K562 (cell line): ENCODE measurements at regions of chr7 and their contacts with region 1.

Region 1: DNA sequence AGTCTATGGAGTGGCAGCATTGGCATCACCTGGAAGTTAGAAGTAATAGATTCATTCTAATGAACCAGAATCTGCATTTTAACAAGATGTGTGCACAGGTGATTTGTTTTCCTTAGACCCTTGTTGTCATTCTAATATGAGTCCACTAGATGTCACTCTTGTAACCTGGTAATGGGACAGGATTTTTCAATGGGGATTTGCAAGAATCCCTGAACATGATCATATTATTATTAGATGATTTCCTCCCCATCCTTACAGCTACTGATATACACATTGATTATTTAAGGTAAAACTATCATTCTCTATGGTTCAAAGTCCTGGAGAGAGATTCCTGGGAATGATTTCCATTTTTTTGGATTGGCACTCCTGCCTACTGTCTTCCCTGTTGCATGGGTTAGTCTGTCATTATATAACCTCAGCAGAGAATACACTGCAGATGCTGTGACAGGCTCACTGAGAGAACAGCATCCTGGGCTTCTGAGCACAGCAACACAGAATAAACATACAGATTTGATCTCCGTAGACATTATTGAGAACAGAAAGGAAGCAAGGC is 194.9 kb downstream of the SUGCT start:
- DNase-seq: peak; percentile 32 to 59 (median 38)
- ATAC-seq: peak; percentile 60; the same call in 2 of the 3 replicates
- H3K4me3 ChIP-seq: no peak overlapping the region
- H3K27ac ChIP-seq: no peak overlapping the region
- H3K4me1 ChIP-seq: no peaks in the 10 kb centered on the region
- H3K27me3 ChIP-seq: no peaks in the 10 kb centered on the region
- CTCF ChIP-seq: peak; percentile 33 to 71 (median 63); a peak in 5 of 6 replicates
- EP300 ChIP-seq: no peak
- POLR2A ChIP-seq: no peak
- RAD21 ChIP-seq: peak; percentile 82 to 88

Region 2: GRCh38 chr7:40232242-40232893 is 97.3 kb before region 1 on chr7:
- CTCF ChIA-PET with region 1: no interaction called
- POLR2A ChIA-PET with region 1: no interaction called
- in situ Hi-C with region 1: no loop called
- intact Hi-C with region 1: loop called (anchors 2 kb)
- DNase-seq: peak in 2 of 4 experiments; percentile 20 to 50
- ATAC-seq: peak; percentile 78
- H3K4me3 ChIP-seq: no peak overlapping the region
- H3K27ac ChIP-seq: no peak overlapping the region
- H3K4me1 ChIP-seq: no peaks in the 10 kb centered on the region
- H3K27me3 ChIP-seq: no peaks in the 10 kb centered on the region
- CTCF ChIP-seq: peak; percentile 49 to 70 (median 58); a peak in 5 of 6 replicates
- EP300 ChIP-seq: no peak
- POLR2A ChIP-seq: no peak
- RAD21 ChIP-seq: peak; percentile 48 to 70

Region 3: GRCh38 chr7:40356871-40357709 is 27.4 kb after region 1 on chr7:
- CTCF ChIA-PET with region 1: no interaction called
- POLR2A ChIA-PET with region 1: no interaction called
- in situ Hi-C with region 1: no loop called
- intact Hi-C with region 1: loop called (anchors 2 kb)
- DNase-seq: no peak
- ATAC-seq: no peak
- H3K4me3 ChIP-seq: no peak overlapping the region
- H3K27ac ChIP-seq: no peak overlapping the region
- H3K4me1 ChIP-seq: no peaks in the 10 kb centered on the region; a peak in 1 of 5 replicates
- H3K27me3 ChIP-seq: no peaks in the 10 kb centered on the region
- CTCF ChIP-seq: no peak
- EP300 ChIP-seq: no peak
- POLR2A ChIP-seq: no peak
- RAD21 ChIP-seq: no peak

Region 4: DNA sequence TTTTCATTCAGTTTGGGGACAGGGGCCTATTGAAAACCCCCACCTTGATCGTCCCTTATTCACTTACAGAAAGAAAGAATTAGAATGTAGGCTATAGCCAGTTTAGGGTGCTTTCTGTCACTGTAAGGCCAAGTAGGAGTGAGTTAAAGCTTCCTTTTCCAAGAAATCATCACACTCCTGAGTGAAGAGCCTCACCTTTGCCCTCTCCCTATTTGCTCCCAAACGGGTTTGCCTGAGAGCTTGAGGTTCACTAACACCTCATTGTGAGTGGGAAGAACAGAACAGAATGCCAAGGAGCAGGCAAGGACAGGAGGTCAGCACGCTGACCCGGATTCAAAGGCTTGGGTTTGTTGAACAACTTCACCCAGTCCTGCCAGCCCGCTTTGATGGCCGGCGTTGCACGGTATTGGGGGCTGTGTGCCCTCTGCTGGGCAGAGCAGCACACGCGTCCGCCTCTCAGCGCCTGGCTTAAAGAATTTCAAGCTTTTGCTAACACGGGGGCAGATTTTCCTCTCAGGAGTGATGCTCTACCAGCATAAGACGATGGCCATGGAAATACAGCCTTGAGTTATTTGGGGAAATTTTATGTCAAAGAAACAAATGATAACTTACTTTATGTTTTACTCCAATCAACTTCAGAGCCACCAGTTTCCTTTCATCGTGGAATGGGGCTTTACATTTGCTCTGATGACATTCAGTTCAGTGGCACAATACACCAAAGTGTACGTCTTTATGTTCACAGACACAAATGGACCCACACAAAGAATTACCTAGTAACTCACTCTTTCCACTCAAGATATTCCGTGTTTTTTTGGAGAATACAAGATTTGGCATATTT is 275.1 kb after region 1 on chr7:
- CTCF ChIA-PET with region 1: no interaction called
- POLR2A ChIA-PET with region 1: no interaction called
- in situ Hi-C with region 1: no loop called
- intact Hi-C with region 1: loop called (anchors 5 kb)
- DNase-seq: peak; percentile 7 to 14 (median 12)
- ATAC-seq: peak; percentile 78
- H3K4me3 ChIP-seq: no peak overlapping the region
- H3K27ac ChIP-seq: no peak overlapping the region
- H3K4me1 ChIP-seq: no peaks in the 10 kb centered on the region
- H3K27me3 ChIP-seq: no peaks in the 10 kb centered on the region
- CTCF ChIP-seq: peak; percentile 42 to 56 (median 55); a peak in 4 of 6 replicates
- EP300 ChIP-seq: no peak
- POLR2A ChIP-seq: no peak
- RAD21 ChIP-seq: peak; percentile 76 to 81

Region 5: DNA sequence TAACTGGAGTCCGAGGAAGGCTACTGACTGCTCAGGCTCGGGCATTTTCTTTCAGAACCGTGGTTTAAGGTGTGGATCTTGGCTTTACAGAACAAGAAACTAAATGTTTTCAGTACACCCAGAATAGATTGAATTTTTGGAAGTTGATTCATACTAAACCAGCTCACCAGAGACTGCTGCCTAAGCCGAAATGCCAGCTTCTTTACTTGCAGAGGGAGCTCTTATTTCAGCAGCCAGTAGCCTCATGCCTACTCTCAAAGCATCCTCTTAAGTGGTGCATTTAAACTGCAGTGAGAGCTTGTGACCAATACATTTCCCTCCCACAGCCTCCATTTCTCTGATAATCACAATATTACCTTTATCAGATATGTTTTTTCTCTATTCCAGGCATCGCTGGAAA is 420.2 kb after region 1 on chr7:
- CTCF ChIA-PET with region 1: no interaction called
- POLR2A ChIA-PET with region 1: no interaction called
- in situ Hi-C with region 1: no loop called
- intact Hi-C with region 1: no loop called
- DNase-seq: no peak
- ATAC-seq: no peak
- H3K4me3 ChIP-seq: no peak overlapping the region
- H3K27ac ChIP-seq: no peak overlapping the region
- H3K4me1 ChIP-seq: no peaks in the 10 kb centered on the region
- H3K27me3 ChIP-seq: no peaks in the 10 kb centered on the region
- CTCF ChIP-seq: no peak
- EP300 ChIP-seq: no peak
- POLR2A ChIP-seq: no peak
- RAD21 ChIP-seq: no peak

Region 6: GRCh38 chr7:41287559-41288335 is 958.1 kb after region 1 on chr7:
- CTCF ChIA-PET with region 1: no interaction called
- POLR2A ChIA-PET with region 1: no interaction called
- in situ Hi-C with region 1: no loop called
- intact Hi-C with region 1: loop called (anchors 10 kb)
- DNase-seq: no peak
- ATAC-seq: no peak
- H3K4me3 ChIP-seq: no peak overlapping the region
- H3K27ac ChIP-seq: no peak overlapping the region
- H3K4me1 ChIP-seq: no peaks in the 10 kb centered on the region
- H3K27me3 ChIP-seq: no peaks in the 10 kb centered on the region
- CTCF ChIP-seq: no peak
- EP300 ChIP-seq: no peak
- POLR2A ChIP-seq: no peak
- RAD21 ChIP-seq: no peak

Region 7: GRCh38 chr7:41696314-41696916 is 1366.7 kb after region 1 on chr7:
- CTCF ChIA-PET with region 1: interaction called, 3 read pairs
- POLR2A ChIA-PET with region 1: no interaction called
- in situ Hi-C with region 1: no loop called
- intact Hi-C with region 1: loop called (anchors 5 kb)
- DNase-seq: peak; percentile 43 to 67 (median 48)
- ATAC-seq: peak; percentile 95
- H3K4me3 ChIP-seq: no peak overlapping the region
- H3K27ac ChIP-seq: no peak overlapping the region
- H3K4me1 ChIP-seq: no peaks in the 10 kb centered on the region
- H3K27me3 ChIP-seq: no peaks in the 10 kb centered on the region; a peak in 1 of 5 replicates
- CTCF ChIP-seq: peak; percentile 47 to 63 (median 59)
- EP300 ChIP-seq: no peak
- POLR2A ChIP-seq: no peak
- RAD21 ChIP-seq: peak; percentile 48 to 58

Region 8: DNA sequence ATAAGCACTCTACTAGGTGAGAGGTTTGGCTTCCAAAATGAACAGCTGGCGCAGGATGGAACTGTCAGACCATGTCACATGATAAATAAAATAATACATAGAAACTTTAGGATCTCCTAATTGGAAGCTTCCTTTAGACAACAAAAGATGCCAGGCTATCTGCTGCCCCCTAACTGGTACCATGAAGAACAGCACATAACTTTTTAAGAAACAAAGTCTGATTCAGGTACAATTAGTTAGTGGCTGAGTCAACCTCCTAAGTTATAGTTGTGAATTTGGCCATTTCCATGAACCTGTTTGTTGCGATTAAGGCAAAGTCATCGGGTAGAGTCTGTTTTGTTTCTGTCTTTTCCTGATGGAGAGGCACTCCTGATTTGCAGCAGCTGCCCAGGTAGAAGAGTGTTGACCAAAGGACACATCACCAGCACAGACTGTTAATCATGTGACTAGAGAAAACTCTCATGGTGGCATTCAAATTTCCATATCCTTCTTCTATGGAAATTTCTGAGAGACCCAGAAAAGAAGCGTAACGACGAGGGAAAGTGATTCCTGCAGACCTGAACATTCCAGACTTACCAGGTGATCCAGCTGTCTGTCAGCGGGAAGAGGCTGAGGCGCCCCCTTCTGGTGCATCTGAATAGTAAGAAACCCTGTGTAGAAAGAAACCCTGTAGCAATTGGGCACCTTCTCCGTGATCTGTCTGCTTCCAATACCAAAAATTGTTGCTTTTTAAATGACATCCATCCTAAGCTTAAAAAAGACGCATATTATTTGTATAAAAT is 1381.8 kb after region 1 on chr7:
- CTCF ChIA-PET with region 1: no interaction called
- POLR2A ChIA-PET with region 1: no interaction called
- in situ Hi-C with region 1: no loop called
- intact Hi-C with region 1: loop called (anchors 5 kb)
- DNase-seq: peak; percentile 17 to 30 (median 18)
- ATAC-seq: peak; percentile 59; the same call in 2 of the 3 replicates
- H3K4me3 ChIP-seq: no peak overlapping the region
- H3K27ac ChIP-seq: no peak overlapping the region
- H3K4me1 ChIP-seq: no peaks in the 10 kb centered on the region
- H3K27me3 ChIP-seq: no peaks in the 10 kb centered on the region
- CTCF ChIP-seq: peak; percentile 31 to 49 (median 34); a peak in 5 of 6 replicates
- EP300 ChIP-seq: no peak
- POLR2A ChIP-seq: no peak
- RAD21 ChIP-seq: 0 out of 4 replicates have a peak, but pooled peaks of 1 of the 2 experiments have one; percentile 10